ENCODE measurements at regions of chr7 and their contacts with region 1.

Region 1: GRCh38 chr7:104883718-104884452 is 130.1 kb upstream of the KMT2E start:
- DNase-seq: peak; percentile 87
- ATAC-seq: peak; percentile 89
- H3K4me3 Mint-ChIP-seq: no peak overlapping the region
- H3K27ac Mint-ChIP-seq: no peak overlapping the region
- H3K4me1 Mint-ChIP-seq: peaks cover 10% of the 10 kb centered on the region
- H3K27me3 Mint-ChIP-seq: no peaks in the 10 kb centered on the region

Region 2: DNA sequence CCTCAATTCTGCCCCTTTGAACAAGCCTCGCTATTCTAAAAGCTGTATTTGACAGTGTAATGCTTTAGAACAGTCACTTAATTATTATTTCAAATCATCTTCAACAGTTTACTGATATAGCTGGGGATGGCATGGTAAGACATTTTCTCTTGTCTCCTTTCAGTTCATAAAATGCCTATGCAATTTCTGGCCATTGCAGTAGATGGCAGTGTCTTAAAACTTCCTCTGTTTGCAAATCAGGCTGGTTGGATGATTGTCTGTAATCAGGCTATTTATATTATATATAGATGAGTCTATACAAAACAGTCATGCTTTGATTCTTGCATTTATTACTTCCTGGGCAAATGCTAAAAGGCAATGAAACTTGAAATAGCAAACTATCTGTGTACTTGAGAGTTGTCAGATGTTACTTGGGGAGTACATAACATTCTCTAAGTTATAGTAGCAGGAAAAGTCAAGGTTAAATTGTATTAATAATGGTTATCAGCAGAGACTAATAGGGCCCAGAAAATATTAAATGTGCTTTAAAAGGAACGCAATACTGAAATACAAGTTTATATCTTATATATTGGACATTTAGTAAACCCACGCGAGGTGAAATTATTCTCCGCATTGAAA is 611.0 kb before region 1 on chr7:
- CTCF ChIA-PET with region 1: no interaction called
- POLR2A ChIA-PET with region 1: no interaction called
- intact Hi-C with region 1: no loop called
- DNase-seq: no peak
- ATAC-seq: no peak
- H3K4me3 Mint-ChIP-seq: no peak overlapping the region
- H3K27ac Mint-ChIP-seq: no peak overlapping the region
- H3K4me1 Mint-ChIP-seq: peaks cover 2% of the 10 kb centered on the region
- H3K27me3 Mint-ChIP-seq: peaks cover 23% of the 10 kb centered on the region

Region 3: GRCh38 chr7:104679085-104679484 is 204.8 kb before region 1 on chr7:
- CTCF ChIA-PET with region 1: no interaction called
- POLR2A ChIA-PET with region 1: no interaction called
- intact Hi-C with region 1: no loop called
- DNase-seq: no peak
- ATAC-seq: no peak
- H3K4me3 Mint-ChIP-seq: no peak overlapping the region
- H3K27ac Mint-ChIP-seq: no peak overlapping the region
- H3K4me1 Mint-ChIP-seq: no peaks in the 10 kb centered on the region
- H3K27me3 Mint-ChIP-seq: peaks cover 12% of the 10 kb centered on the region

Region 4: DNA sequence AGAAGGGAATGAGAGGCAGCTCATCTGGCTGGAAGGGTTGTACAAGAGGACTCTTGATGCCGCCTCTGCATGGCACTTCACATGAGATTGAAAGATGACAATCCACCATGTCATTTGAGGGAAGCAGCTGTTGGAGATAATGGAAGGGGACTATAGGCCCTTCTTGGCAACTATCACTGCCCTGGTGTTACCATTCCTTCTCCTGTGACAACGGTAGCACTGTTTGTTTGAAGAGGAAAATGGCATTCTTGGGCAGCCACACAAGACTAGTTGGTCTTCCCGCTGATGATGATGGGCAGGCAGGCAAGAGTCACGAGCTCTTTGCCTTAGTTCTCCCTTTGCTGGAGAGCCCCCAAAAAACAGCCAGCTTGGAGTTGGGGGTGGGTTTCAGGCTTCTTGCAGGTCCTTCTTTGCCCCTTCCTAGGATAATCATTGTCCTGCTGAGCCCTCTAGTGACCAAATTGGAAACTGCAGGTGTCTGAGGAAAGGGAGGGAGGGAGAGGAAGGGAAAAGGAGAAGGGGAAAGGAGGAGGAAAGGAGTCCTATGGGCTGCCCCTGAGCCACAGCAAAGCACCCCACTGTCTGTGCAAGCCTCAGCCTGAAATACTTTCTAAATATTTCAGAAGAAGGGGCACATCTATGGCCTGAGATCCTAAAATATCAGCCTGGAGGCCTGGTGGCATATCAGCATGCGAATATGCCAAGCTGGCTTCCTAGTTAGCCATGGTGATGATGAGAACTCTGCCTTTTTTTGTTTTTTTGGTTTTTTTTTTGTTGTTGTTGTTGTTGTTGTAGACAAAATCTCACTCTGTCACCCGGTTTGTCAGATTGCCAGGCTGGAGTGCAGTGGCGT is 35.5 kb before region 1 on chr7:
- CTCF ChIA-PET with region 1: interaction called, 12 read pairs
- POLR2A ChIA-PET with region 1: no interaction called
- intact Hi-C with region 1: no loop called
- DNase-seq: peak; percentile 70
- ATAC-seq: peak; percentile 66
- H3K4me3 Mint-ChIP-seq: no peak overlapping the region
- H3K27ac Mint-ChIP-seq: no peak overlapping the region
- H3K4me1 Mint-ChIP-seq: no peaks in the 10 kb centered on the region
- H3K27me3 Mint-ChIP-seq: peaks cover 10% of the 10 kb centered on the region

Region 5: DNA sequence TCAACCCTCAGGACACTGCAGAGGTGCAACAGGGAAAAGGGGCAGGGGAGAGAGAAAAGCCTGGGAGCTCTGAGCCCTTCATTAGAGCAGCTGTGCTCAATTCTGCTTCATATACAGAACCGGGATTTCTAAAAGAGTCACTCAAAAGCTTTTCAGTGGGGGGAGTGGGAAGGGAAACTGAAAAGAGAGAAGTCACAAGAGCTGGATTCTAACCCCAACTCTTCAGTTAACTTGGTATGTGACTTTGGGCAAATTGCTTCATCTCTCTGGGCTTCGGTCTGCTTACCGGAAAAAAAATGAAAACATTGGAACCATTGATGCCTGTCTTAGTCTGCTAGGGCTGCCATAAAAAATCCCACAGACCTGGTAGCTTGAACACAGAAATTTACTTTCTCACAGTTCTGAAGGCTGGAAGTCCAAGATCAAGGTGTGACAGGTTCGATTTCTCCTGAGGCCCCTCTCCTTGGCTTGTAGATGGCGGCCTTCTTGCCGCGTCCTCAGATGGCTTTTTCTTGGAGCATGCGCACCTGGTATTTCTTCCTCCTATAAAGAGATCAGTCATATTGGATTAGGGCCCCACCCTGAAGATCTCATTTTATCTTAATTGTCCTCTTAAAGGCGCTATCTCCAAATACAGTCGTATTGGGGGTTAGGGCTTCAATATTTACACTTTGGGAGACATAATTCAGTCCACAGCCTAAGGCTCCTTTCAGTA is 11.8 kb after region 1 on chr7:
- CTCF ChIA-PET with region 1: interaction called, 23 read pairs
- POLR2A ChIA-PET with region 1: no interaction called
- intact Hi-C with region 1: no loop called
- DNase-seq: no peak
- ATAC-seq: no peak
- H3K4me3 Mint-ChIP-seq: no peak overlapping the region
- H3K27ac Mint-ChIP-seq: no peak overlapping the region
- H3K4me1 Mint-ChIP-seq: peaks cover 6% of the 10 kb centered on the region
- H3K27me3 Mint-ChIP-seq: peaks cover 3% of the 10 kb centered on the region

Region 6: DNA sequence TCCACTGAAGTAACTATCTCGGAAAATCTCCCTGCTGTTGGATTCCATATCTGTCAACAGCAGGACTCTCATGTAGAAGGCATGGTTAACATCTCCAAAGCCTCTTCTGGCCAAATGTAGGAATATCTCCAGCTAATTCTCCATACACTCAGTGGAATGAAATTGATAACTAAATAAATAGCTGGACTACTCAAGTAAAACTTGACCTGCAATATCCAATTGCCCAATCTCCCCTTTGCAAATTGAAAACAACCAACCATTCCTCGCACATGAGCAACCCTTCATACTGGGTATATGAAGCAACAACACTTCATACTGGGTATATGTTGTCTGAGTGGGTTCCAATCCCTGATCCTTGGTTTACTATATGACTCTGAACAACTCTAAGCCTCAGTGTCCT is 24.8 kb after region 1 on chr7:
- CTCF ChIA-PET with region 1: interaction called, 18 read pairs
- POLR2A ChIA-PET with region 1: no interaction called
- intact Hi-C with region 1: no loop called
- DNase-seq: no peak
- ATAC-seq: no peak
- H3K4me3 Mint-ChIP-seq: no peak overlapping the region
- H3K27ac Mint-ChIP-seq: no peak overlapping the region
- H3K4me1 Mint-ChIP-seq: no peaks in the 10 kb centered on the region
- H3K27me3 Mint-ChIP-seq: peaks cover 7% of the 10 kb centered on the region

Region 7: GRCh38 chr7:105131033-105131656 is 247.3 kb after region 1 on chr7:
- CTCF ChIA-PET with region 1: no interaction called
- POLR2A ChIA-PET with region 1: no interaction called
- intact Hi-C with region 1: loop called in 1 of 2 experiments (anchors 5 kb)
- DNase-seq: no peak
- ATAC-seq: peak; percentile 66
- H3K4me3 Mint-ChIP-seq: no peak overlapping the region
- H3K27ac Mint-ChIP-seq: peak overlapping the region; percentile 47
- H3K4me1 Mint-ChIP-seq: peaks cover 37% of the 10 kb centered on the region
- H3K27me3 Mint-ChIP-seq: no peaks in the 10 kb centered on the region

Region 8: GRCh38 chr7:105707967-105708762 is 824.3 kb after region 1 on chr7:
- CTCF ChIA-PET with region 1: no interaction called
- POLR2A ChIA-PET with region 1: no interaction called
- intact Hi-C with region 1: no loop called
- DNase-seq: no peak
- ATAC-seq: no peak
- H3K4me3 Mint-ChIP-seq: no peak overlapping the region
- H3K27ac Mint-ChIP-seq: no peak overlapping the region
- H3K4me1 Mint-ChIP-seq: peaks cover 15% of the 10 kb centered on the region
- H3K27me3 Mint-ChIP-seq: no peaks in the 10 kb centered on the region